ENCODE measurements at regions of chrX and their contacts with region 1.

Region 1: GRCh38 chrX:139932901-139933796 is at the start of gene ATP11C:
- DNase-seq: peak; percentile 67
- ATAC-seq: peak; percentile 86
- H3K4me3 Mint-ChIP-seq: peak within 1 kb of the TSS; percentile 88
- H3K27ac Mint-ChIP-seq: peak within 1 kb of the TSS; percentile 95
- H3K4me1 Mint-ChIP-seq: peaks cover 20% of the 10 kb centered on the region
- H3K27me3 Mint-ChIP-seq: no peaks in the 10 kb centered on the region
- CTCF ChIP-seq: no peak
- total RNA-seq, gene ATP11C: 19.7 and 21.3 TPM in 2 replicates

Region 2: GRCh38 chrX:139554376-139554775 is 378.8 kb before region 1 on chrX:
- CTCF ChIA-PET with region 1: no interaction called
- POLR2A ChIA-PET with region 1: interaction called, 4 read pairs
- intact Hi-C with region 1: loop called (anchors 5 kb)
- DNase-seq: no peak
- ATAC-seq: no peak
- H3K4me3 Mint-ChIP-seq: peak overlapping the region; percentile 17
- H3K27ac Mint-ChIP-seq: peak overlapping the region; percentile 18
- H3K4me1 Mint-ChIP-seq: peaks cover 23% of the 10 kb centered on the region
- H3K27me3 Mint-ChIP-seq: no peaks in the 10 kb centered on the region
- CTCF ChIP-seq: no peak

Region 3: GRCh38 chrX:139759637-139760036 is 173.5 kb before region 1 on chrX:
- CTCF ChIA-PET with region 1: no interaction called
- POLR2A ChIA-PET with region 1: no interaction called
- intact Hi-C with region 1: loop called (anchors 10 kb)
- DNase-seq: no peak
- ATAC-seq: no peak
- H3K4me3 Mint-ChIP-seq: no peak overlapping the region
- H3K27ac Mint-ChIP-seq: no peak overlapping the region
- H3K4me1 Mint-ChIP-seq: no peaks in the 10 kb centered on the region
- H3K27me3 Mint-ChIP-seq: no peaks in the 10 kb centered on the region
- CTCF ChIP-seq: no peak

Region 4: DNA sequence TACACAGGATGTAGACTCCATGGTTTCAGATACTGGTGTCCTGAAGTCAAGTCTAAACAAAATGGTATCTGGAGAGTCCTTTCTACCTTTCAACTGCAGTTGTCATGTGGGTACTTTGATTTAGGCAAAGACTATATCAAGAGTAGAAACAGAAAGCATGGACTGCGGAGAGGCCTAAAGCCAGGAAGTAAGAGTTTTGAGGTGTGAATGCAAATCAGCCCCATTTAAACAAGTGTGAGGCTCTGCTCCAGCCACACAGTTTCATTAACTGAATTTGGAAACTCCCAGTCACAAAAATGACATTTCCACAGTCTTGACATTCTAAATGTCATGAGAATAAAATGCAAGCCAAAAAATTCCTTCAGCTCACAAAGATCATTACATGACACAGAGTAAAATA is 138.0 kb before region 1 on chrX:
- CTCF ChIA-PET with region 1: no interaction called
- POLR2A ChIA-PET with region 1: no interaction called
- intact Hi-C with region 1: loop called (anchors 5 kb)
- DNase-seq: no peak
- ATAC-seq: peak; percentile 58
- H3K4me3 Mint-ChIP-seq: peak overlapping the region; percentile 60
- H3K27ac Mint-ChIP-seq: peak overlapping the region; percentile 63
- H3K4me1 Mint-ChIP-seq: peaks cover 13% of the 10 kb centered on the region
- H3K27me3 Mint-ChIP-seq: no peaks in the 10 kb centered on the region
- CTCF ChIP-seq: no peak

Region 5: DNA sequence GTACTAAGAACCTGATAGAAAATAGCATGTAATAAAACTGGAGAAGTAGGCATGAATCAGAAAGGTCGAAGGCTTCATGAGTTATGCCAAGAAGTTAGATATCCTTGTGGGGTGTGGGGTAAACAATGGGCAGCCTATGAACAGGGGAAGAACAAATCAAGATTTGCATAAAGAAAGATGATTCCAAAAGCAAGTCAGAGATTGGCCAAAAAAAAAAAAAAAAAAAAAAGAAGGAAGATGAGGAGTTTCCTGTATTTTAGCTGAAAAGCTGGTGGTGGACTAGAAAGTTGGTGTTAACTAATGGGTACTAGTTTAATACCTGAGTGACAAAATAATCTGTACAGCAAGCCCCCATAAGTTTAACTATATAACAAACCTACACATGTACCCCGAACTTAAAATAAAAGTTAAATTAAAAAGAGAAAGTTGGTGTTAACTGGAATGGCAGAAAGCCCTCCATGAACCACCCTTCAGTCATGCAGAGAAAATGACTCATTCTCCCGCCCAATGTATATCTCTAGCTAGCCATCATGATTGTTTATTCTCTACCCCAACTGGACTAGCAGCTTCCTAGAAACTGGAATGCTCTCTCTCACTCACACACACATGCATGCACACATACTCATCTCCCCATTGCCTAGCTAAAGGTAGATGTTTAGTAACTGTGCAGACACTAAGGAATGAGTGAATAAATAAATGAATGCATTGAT is 42.0 kb before region 1 on chrX:
- CTCF ChIA-PET with region 1: no interaction called
- POLR2A ChIA-PET with region 1: no interaction called
- intact Hi-C with region 1: loop called (anchors 5 kb)
- DNase-seq: no peak
- ATAC-seq: no peak
- H3K4me3 Mint-ChIP-seq: no peak overlapping the region
- H3K27ac Mint-ChIP-seq: no peak overlapping the region
- H3K4me1 Mint-ChIP-seq: peaks cover 29% of the 10 kb centered on the region
- H3K27me3 Mint-ChIP-seq: no peaks in the 10 kb centered on the region
- CTCF ChIP-seq: no peak

Region 6: DNA sequence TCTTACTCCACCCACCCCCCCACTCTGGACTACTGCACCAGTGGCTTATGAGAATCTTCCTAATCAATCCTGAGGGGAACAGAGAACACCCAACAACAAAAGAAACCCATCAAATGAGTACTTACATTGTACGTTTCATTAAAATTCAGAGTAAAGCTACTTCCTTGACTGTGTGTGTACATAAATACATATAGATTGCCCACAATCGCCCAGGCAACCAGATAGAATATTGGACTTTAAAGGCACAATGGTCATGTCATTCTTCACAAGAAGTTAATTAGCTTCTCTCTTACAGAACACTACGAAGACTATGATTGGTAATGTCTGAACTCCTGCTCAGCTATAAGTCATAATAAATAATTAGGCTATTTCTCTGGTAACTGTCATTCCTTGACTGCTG is 11.9 kb after region 1 on chrX:
- CTCF ChIA-PET with region 1: no interaction called
- POLR2A ChIA-PET with region 1: no interaction called
- intact Hi-C with region 1: no loop called
- DNase-seq: no peak
- ATAC-seq: no peak
- H3K4me3 Mint-ChIP-seq: no peak overlapping the region
- H3K27ac Mint-ChIP-seq: no peak overlapping the region
- H3K4me1 Mint-ChIP-seq: no peaks in the 10 kb centered on the region
- H3K27me3 Mint-ChIP-seq: peaks cover 2% of the 10 kb centered on the region
- CTCF ChIP-seq: no peak

Measured in activated B cell treated with CpG ODN at 0.5 μM for 24 hours (primary cell).